ENCODE measurements at regions of chr5 and their contacts with region 1.

Region 1: GRCh38 chr5:39570403-39571027 is 145.7 kb upstream of the DAB2 start:
- DNase-seq: no peak
- ATAC-seq: peak; percentile 63

Region 2: DNA sequence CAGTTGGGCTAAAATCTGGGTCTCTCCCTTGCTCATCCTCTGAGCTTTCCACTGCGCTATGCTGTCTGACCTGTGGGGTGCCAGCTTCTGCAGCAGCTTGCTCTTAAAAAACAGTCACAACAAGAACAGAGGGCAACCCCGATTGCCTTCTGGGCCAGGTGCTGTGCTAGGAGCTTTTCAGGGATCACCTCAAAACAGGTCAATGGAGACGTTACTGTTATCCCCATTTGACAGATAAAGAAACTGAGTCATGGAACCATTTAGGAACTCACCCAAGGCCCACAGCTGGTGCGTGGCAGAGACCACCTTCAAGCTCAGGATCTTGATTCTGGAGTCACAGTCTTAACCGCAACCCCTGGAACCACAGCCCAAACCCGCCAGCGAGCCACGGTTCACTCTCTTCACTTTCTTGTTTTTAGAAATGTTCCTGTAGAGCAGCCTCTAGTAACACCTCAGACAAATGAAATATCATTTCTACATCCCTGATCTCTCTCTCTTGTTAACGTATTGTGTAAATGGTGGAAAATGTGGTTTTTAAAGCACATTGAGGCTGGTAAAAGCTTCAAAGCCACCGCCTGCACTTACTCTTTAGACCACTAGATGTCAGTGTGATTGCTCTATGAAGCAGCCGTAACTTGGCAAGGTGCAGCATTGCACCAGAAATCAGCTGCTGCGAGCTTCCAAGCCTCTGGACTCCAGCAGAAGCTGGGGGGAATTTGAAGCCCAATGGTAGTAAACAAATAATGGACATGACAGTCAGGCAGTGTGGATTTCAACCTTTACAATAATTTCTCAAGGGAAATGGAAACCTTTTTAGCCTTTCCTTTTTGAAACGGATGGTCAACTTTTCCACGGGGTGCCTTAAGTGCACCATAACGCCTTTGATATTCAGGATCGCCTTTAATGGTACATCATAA is 352.9 kb before region 1 on chr5:
- intact Hi-C with region 1: loop called in 1 of 2 experiments (anchors 5 kb)
- DNase-seq: peak; percentile 70 to 80
- ATAC-seq: peak; percentile 83

Region 3: DNA sequence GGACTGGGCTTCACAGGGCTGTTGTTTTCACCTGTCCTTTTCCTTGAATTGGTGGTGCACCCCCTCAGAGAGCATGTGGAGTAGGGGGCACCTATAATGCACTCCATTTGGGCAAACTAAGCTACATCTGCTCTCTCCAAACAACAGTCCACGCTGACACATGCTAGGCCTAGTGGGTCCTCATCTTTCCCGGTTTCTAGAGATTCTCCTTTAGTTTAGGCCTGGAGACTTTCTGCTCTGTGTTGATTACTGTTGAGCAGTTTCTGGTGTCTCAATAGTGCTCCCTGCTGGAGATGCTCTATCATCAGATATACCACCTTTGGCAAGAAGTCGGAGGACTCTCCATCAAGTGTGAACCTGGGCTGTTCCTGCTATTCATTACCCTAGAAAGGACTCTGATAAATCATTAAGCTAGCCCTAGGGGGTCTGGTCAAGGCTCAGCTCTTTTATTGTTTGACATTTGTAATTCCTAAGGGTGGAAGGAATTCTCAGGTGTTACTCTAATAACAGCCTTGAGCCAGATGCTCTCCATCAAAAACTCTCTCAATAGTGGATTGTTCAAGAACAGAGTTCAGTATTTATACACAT is 287.2 kb before region 1 on chr5:
- intact Hi-C with region 1: loop called in 1 of 2 experiments (anchors 5 kb)
- DNase-seq: no peak
- ATAC-seq: peak; percentile 98

Region 4: GRCh38 chr5:39394946-39395345 is 175.6 kb before region 1 on chr5:
- intact Hi-C with region 1: no loop called
- DNase-seq: no peak
- ATAC-seq: no peak

Region 5: GRCh38 chr5:40879163-40879942 is 1308.8 kb after region 1 on chr5:
- intact Hi-C with region 1: loop called in 1 of 2 experiments (anchors 10 kb)
- DNase-seq: no peak
- ATAC-seq: no peak

Measured in left colon (tissue), 2 donors.